Aorta (tissue), 5 donors: ENCODE measurements at regions of chr12 and their contacts with region 1.

Region 1: GRCh38 chr12:25958428-25959070 is at the start of gene RASSF8:
- DNase-seq: peak; percentile 81 to 90
- ATAC-seq: peak; percentile 91
- H3K4me3 ChIP-seq: peak within 1 kb of the TSS; percentile 84 to 99
- H3K27ac ChIP-seq: peak within 1 kb of the TSS; percentile 97 to 100
- H3K4me1 ChIP-seq: peaks cover 0 to 8% of the 10 kb centered on the region in 2 donors
- H3K27me3 ChIP-seq: no peaks in the 10 kb centered on the region
- total RNA-seq, gene RASSF8: 80.9 to 86.7 TPM

Region 2: DNA sequence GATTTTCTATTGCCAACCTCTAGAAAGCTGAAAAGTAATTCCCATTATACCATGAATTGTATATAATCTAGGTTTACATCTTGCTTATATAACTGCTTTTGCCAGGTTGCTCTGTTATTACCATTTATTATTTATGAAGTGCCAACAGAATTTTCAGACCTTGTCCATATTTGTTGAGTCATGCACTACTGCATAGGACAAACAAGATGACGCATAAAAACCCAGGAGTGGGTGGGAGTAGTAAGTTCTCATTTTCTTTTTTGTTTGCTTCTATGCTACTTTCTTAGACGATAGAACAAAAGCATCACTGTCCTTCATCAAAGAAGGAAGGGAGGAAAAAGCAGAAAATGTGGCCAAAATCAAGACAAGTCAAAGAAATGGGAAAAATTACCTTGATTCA is 119.1 kb before region 1 on chr12:
- intact Hi-C with region 1: loop called in 1 of 2 experiments (anchors 10 kb)
- DNase-seq: no peak
- ATAC-seq: no peak
- H3K4me3 ChIP-seq: no peak overlapping the region
- H3K27ac ChIP-seq: no peak overlapping the region
- H3K4me1 ChIP-seq: no peaks in the 10 kb centered on the region
- H3K27me3 ChIP-seq: no peaks in the 10 kb centered on the region

Region 3: GRCh38 chr12:25993901-25994651 is 35.5 kb after region 1 on chr12:
- intact Hi-C with region 1: loop called in 1 of 2 experiments (anchors 5 kb)
- DNase-seq: no peak
- ATAC-seq: no peak
- H3K4me3 ChIP-seq: peak overlapping the region in 1 of 2 donors; percentile 32
- H3K27ac ChIP-seq: peak overlapping the region; percentile 77 to 81
- H3K4me1 ChIP-seq: peaks cover 2 to 3% of the 10 kb centered on the region in 2 donors
- H3K27me3 ChIP-seq: no peaks in the 10 kb centered on the region

Region 4: GRCh38 chr12:26017484-26018206 is 59.1 kb after region 1 on chr12:
- intact Hi-C with region 1: loop called (anchors 5 kb)
- DNase-seq: no peak
- ATAC-seq: peak; percentile 57
- H3K4me3 ChIP-seq: no peak overlapping the region
- H3K27ac ChIP-seq: no peak overlapping the region
- H3K4me1 ChIP-seq: no peaks in the 10 kb centered on the region
- H3K27me3 ChIP-seq: no peaks in the 10 kb centered on the region

Region 5: DNA sequence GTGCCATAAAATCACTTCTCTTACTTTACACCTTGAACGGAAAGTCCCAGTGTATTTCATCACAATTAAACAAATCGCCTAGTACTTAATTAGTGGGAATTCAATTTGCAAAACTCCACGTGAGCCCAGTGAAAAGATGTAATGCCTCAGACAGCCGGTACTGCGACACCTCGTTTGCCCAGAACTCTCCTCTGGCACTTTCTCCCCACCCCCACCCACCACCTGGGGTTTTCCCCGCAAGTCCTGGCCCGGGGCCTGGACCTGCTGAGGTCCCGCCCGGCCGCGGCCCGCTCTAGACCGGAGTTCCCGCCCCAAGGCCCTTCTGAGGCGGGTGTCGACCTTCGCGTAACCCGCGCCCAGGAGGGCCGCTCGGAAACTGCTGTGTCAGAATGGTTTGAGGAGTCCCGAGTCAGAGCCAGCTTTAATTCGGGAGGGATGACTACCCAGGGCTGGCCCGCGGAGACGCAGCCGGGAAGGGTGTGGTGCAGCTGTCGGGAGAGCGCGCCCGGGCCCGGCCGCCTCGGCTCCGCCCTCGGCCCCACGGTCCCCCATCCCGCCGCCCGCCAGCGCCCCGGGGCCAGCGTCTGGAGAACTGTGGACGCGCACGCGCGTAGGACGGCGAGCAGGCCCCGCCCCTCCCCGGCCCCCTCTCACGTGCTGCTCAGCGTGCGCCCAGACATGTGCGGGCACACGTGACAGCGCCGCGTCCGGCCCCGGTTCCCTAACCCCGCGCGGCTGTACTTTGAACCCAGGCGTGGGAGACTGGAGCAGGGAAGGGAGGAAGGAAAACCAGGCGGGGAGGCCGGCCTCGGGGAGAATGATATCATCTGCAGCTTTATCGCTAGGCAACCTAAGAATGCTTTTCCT is 155.5 kb after region 1 on chr12:
- intact Hi-C with region 1: loop called in 1 of 2 experiments (anchors 10 kb)
- DNase-seq: peak; percentile 96 to 97
- ATAC-seq: peak; percentile 95
- H3K4me3 ChIP-seq: peak overlapping the region; percentile 36 to 60
- H3K27ac ChIP-seq: peak overlapping the region; percentile 86 to 98
- H3K4me1 ChIP-seq: no peaks in the 10 kb centered on the region
- H3K27me3 ChIP-seq: no peaks in the 10 kb centered on the region